ENCODE measurements at regions of chr11 and their contacts with region 1.

Region 1: GRCh38 chr11:35013514-35014233 is 97.3 kb downstream of the PDHX start:
- DNase-seq: peak; percentile 71
- H3K4me3 Mint-ChIP-seq: peak overlapping the region; percentile 39
- H3K27ac Mint-ChIP-seq: peak overlapping the region; percentile 93
- H3K4me1 Mint-ChIP-seq: peaks cover 41% of the 10 kb centered on the region
- H3K27me3 Mint-ChIP-seq: peaks cover 4% of the 10 kb centered on the region

Region 2: GRCh38 chr11:34234086-34234740 is 779.5 kb before region 1 on chr11:
- CTCF ChIA-PET with region 1: no interaction called
- intact Hi-C with region 1: loop called (anchors 10 kb)
- DNase-seq: peak; percentile 93
- H3K4me3 Mint-ChIP-seq: no peak overlapping the region
- H3K27ac Mint-ChIP-seq: peak overlapping the region; percentile 83
- H3K4me1 Mint-ChIP-seq: peaks cover 57% of the 10 kb centered on the region
- H3K27me3 Mint-ChIP-seq: no peaks in the 10 kb centered on the region

Region 3: DNA sequence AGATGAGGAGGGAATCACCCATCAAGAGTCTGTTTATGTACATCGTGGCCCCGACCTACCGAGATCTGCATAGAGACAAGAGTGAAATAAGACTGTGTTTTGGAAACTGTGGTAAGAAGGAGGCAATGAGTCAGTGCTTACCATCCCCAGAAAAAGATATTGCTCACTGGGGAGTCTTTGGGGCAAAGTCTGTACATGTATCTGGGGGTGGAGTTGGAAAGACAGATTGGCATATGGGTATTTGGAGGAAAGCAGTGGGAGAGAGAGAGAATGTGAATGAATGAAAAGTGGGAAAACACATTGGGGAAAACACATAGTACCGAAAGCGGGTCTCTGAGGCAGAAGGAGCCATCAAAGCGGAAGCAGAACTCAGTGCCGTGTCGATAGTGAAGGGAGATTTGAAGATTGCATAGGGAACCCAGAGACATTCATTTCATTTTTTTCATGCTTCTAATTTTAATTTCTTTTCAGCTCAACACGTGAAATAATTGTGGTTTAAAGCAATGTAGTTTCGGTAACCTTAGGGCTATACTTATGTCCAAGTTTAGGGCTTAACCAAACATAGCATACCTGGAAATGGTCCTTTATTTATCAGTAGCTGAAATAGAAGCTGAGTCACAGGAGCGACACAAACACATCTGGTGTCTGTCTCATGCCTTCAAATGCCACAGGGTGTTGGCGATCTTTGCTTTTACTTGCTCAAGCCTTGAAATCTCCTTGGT is 26.7 kb after region 1 on chr11:
- CTCF ChIA-PET with region 1: interaction called, 6 read pairs
- intact Hi-C with region 1: loop called (anchors 1 kb)
- DNase-seq: peak; percentile 83
- H3K4me3 Mint-ChIP-seq: peak overlapping the region; percentile 76
- H3K27ac Mint-ChIP-seq: peak overlapping the region; percentile 94
- H3K4me1 Mint-ChIP-seq: peaks cover 60% of the 10 kb centered on the region
- H3K27me3 Mint-ChIP-seq: peaks cover 5% of the 10 kb centered on the region

Region 4: GRCh38 chr11:35126000-35126878 is 112.6 kb after region 1 on chr11:
- CTCF ChIA-PET with region 1: no interaction called
- intact Hi-C with region 1: loop called (anchors 1 kb)
- DNase-seq: peak; percentile 81
- H3K4me3 Mint-ChIP-seq: peak overlapping the region; percentile 54
- H3K27ac Mint-ChIP-seq: peak overlapping the region; percentile 91
- H3K4me1 Mint-ChIP-seq: peaks cover 65% of the 10 kb centered on the region
- H3K27me3 Mint-ChIP-seq: no peaks in the 10 kb centered on the region

Region 5: DNA sequence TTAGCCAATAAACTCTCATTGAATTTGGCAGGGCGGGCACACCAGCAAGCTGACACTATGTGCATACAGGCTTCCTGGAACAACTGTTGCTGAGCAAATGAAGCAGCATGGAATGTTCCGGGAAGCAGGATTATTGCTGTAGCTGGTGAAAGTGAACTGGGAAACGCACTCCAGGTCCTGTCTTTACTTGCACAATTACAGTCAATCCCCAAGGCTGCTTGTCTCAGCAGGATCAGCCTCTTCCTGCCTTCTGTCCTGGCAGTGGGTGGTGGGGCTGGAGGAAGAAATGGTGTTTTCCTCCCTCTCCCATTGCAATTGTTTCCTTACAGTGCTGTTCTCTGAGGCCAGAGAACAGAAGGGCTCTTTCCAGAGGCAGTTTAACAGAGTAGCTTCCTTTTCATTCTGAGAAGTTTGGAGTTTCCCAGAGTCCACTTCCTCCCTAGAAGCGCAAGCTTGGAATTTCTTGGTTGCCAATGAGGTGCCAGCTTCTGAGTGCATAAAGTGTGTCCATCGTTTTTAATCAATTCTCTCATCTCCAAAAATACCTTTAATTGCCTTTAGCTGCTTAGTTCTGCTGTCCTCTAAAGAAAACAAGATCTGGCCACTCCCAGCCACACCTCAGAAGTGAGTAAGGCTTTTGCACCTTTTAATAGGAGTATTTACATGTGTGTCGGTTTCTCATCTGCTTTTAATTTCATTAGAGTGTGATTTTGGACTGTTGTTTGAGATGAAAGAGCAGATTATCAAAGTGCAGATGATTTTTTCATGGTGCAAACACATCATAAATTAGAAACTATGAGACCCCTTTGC is 145.2 kb after region 1 on chr11:
- CTCF ChIA-PET with region 1: no interaction called
- intact Hi-C with region 1: no loop called
- DNase-seq: no peak
- H3K4me3 Mint-ChIP-seq: no peak overlapping the region
- H3K27ac Mint-ChIP-seq: peak overlapping the region; percentile 98
- H3K4me1 Mint-ChIP-seq: peaks cover 97% of the 10 kb centered on the region
- H3K27me3 Mint-ChIP-seq: no peaks in the 10 kb centered on the region

Region 6: DNA sequence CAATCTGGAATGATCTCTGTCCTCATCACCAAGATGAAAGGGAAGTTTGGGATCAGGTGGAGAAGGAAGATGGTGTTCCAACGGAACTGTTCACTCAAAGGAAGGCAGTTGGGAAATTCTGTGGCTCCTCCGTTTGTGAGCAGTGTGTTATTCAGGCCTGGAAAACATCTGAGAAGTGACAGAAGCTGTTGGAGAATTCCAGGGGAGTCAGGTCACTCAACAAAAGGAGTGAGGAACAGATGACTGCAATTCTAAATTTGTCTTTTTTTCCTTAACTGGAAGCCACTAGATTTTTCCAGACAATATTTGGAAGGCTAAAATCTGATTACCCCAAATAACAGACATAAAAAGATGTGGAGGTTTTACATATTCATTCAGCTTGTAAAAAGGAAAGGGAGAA is 233.1 kb after region 1 on chr11:
- CTCF ChIA-PET with region 1: no interaction called
- intact Hi-C with region 1: loop called (anchors 2 kb)
- DNase-seq: no peak
- H3K4me3 Mint-ChIP-seq: no peak overlapping the region
- H3K27ac Mint-ChIP-seq: no peak overlapping the region
- H3K4me1 Mint-ChIP-seq: peaks cover 66% of the 10 kb centered on the region
- H3K27me3 Mint-ChIP-seq: no peaks in the 10 kb centered on the region

Region 7: GRCh38 chr11:35391922-35392813 is 378.5 kb after region 1 on chr11:
- CTCF ChIA-PET with region 1: interaction called, 3 read pairs
- intact Hi-C with region 1: loop called (anchors 1 kb)
- DNase-seq: peak; percentile 93
- H3K4me3 Mint-ChIP-seq: peak overlapping the region; percentile 17
- H3K27ac Mint-ChIP-seq: no peak overlapping the region
- H3K4me1 Mint-ChIP-seq: peaks cover 39% of the 10 kb centered on the region
- H3K27me3 Mint-ChIP-seq: no peaks in the 10 kb centered on the region

Measured in activated naive CD4-positive, alpha-beta T cell treated with anti-CD3 and anti-CD28 coated beads for 36 hours (primary cell).